MCF 10A (cell line): ENCODE measurements at regions of chr3 and their contacts with region 1.

Region 1: DNA sequence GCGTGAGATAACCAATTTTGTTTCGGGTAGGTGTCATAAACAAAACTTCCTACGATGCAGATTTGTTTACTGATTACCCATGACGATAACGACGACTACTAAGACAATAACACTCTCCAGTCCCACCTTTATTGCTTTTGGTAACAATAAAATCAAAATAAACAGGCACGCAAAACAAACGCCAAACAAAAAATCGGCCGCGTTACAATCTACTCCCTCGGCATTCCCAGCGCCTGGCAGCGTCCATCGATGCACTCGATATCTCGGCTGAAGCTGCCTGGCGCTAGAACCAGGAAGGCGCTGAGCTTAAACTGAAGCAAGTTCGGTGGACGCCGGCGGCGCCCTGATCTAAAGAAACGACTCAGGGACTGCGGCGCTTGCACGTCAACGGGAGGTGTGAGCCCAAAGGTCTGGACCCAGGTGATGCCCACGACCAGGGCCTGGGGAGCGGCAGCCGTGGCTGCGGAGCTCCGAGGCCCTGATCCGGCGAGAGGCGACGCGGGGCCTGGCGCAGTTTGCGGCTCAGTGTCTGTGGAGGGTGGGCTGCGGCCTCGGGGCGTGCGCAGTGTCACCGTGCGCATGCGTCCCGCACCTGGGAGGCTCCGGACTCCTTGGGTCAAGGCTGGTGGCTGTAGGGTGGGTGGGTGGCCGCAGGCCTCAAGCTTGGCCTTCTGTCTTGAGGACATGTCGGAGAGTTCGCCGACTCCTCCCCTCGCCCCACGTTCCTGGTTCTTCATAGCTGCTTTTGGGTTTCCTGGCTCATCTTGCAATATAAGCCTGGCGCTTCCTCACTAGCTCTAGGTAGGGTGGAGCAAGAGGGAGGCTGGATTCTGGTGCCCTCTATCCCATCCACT is at the start of gene RSRC1:
- DNase-seq: peak; percentile 91
- H3K4me3 Mint-ChIP-seq: peak within 1 kb of the TSS; percentile 86
- H3K27ac Mint-ChIP-seq: peak within 1 kb of the TSS; percentile 97
- H3K4me1 Mint-ChIP-seq: peaks cover 29% of the 10 kb centered on the region
- H3K27me3 Mint-ChIP-seq: no peaks in the 10 kb centered on the region
- CTCF ChIP-seq: no peak
- total RNA-seq, gene RSRC1: 32.3 and 35.8 TPM in 2 replicates

Region 2: DNA sequence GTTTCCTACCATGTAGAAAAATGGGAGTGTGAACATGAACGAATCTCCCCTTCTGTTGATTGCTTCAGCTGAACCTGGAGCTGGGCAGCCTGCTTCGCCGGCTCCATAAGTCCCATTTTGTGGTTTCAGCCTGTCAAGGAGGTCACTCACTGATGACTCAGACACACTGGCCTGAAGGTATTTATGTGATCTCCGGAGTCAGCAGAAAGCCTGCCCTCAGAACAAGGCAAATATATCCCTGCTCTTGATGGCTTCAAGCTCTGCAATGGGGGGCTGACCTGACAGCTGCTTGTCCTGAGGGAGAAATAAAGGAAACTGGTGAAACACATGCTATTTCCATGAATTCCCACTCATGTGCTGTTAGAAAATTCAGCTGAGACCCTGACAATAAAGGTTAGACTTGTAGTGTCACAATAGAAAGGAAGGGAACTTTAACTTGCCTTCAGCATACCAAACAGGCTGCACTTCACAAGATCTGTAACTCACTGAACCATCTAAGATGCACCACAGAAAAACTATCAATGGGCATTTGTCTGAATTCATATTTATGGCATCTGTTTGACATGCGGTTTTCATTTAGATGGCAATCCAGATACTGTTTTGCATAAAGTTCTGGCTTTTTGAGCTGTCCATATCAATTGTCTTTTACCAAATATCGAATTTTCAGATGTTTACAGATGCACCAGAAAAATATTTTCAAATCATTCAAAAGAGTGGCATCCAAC is 324.8 kb before region 1 on chr3:
- CTCF ChIA-PET with region 1: interaction called, 5 read pairs
- POLR2A ChIA-PET with region 1: interaction called, 15 read pairs
- intact Hi-C with region 1: no loop called
- DNase-seq: peak; percentile 93
- H3K4me3 Mint-ChIP-seq: no peak overlapping the region
- H3K27ac Mint-ChIP-seq: peak overlapping the region; percentile 55
- H3K4me1 Mint-ChIP-seq: peaks cover 48% of the 10 kb centered on the region
- H3K27me3 Mint-ChIP-seq: no peaks in the 10 kb centered on the region
- CTCF ChIP-seq: no peak

Region 3: DNA sequence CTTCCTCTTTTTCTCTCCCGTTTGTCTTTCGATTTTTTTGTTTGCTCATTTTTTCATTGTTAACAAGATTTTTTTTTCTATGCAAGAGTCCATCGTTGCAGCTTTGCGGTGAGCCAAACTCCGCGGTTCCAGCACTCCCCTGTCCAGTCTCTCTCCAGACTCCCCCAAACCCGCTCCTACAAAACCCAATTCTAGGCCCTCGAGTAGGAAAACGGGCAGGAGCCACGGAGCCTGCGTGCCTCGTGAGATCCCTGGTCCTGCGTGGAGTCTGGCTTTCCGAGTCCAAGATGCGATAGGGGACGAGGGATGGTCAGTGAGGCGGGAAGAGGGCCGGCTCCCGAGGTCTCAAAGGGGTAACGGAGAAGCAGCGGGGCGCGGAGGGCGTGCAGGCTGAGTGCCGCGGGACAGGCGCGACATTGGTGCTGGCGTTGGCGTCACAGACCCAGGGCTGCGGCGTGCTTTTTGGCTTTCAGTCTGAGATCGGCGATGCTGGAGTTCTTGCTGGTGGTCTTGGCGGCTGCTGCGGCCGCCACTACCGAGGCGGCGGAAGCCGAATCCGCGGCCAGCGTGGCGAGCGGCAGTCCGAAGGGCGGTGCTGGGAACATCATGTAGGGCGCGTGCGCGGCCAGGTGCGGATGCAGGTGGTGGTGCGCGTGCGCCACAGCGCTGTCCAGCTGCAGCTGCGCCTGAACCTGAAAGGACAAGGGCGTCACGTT is 12.3 kb before region 1 on chr3:
- CTCF ChIA-PET with region 1: interaction called, 3 read pairs
- POLR2A ChIA-PET with region 1: interaction called, 12 read pairs
- intact Hi-C with region 1: no loop called
- DNase-seq: peak; percentile 74
- H3K4me3 Mint-ChIP-seq: peak overlapping the region; percentile 84
- H3K27ac Mint-ChIP-seq: peak overlapping the region; percentile 58
- H3K4me1 Mint-ChIP-seq: peaks cover 6% of the 10 kb centered on the region
- H3K27me3 Mint-ChIP-seq: no peaks in the 10 kb centered on the region
- CTCF ChIP-seq: no peak

Region 4: GRCh38 chr3:158121295-158121694 is 11.3 kb after region 1 on chr3:
- CTCF ChIA-PET with region 1: interaction called, 6 read pairs
- POLR2A ChIA-PET with region 1: interaction called, 59 read pairs
- intact Hi-C with region 1: no loop called
- DNase-seq: no peak
- H3K4me3 Mint-ChIP-seq: no peak overlapping the region
- H3K27ac Mint-ChIP-seq: no peak overlapping the region
- H3K4me1 Mint-ChIP-seq: peaks cover 8% of the 10 kb centered on the region
- H3K27me3 Mint-ChIP-seq: no peaks in the 10 kb centered on the region
- CTCF ChIP-seq: no peak

Region 5: GRCh38 chr3:158167737-158168471 is 57.9 kb after region 1 on chr3:
- CTCF ChIA-PET with region 1: interaction called, 3 read pairs
- POLR2A ChIA-PET with region 1: interaction called, 9 read pairs
- intact Hi-C with region 1: loop called (anchors 1 kb)
- DNase-seq: peak; percentile 96
- H3K4me3 Mint-ChIP-seq: peak overlapping the region; percentile 49
- H3K27ac Mint-ChIP-seq: peak overlapping the region; percentile 59
- H3K4me1 Mint-ChIP-seq: peaks cover 18% of the 10 kb centered on the region
- H3K27me3 Mint-ChIP-seq: no peaks in the 10 kb centered on the region
- CTCF ChIP-seq: no peak

Region 6: DNA sequence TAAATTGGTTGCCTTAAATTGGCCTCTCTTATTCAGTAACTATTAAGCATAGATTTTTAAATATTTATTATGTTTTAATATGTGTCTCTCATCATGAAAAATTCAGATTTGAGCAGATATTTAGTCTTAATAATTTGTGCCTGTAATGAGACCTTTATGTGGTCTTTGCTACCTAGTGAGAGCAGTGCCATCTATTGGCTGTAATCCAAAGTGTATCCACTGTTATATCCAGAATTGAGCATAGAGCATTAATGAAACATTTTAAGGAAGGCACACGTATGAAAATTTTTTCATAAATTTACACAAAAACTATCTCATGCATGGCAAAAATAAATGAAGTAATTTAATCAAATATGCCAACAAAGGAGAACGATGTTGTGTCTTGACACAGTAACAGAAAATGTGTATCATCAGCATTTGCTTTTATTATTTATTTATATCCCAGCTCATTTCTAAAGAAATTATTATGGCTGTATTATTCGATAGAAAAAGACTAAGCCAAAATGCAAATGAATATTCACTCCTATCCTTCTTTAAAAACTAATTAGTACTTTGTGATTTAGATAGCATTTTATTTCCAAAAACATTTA is 203.4 kb after region 1 on chr3:
- CTCF ChIA-PET with region 1: interaction called, 5 read pairs
- POLR2A ChIA-PET with region 1: no interaction called
- intact Hi-C with region 1: loop called (anchors 2 kb)
- DNase-seq: peak; percentile 52
- H3K4me3 Mint-ChIP-seq: no peak overlapping the region
- H3K27ac Mint-ChIP-seq: peak overlapping the region; percentile 25
- H3K4me1 Mint-ChIP-seq: peaks cover 5% of the 10 kb centered on the region
- H3K27me3 Mint-ChIP-seq: no peaks in the 10 kb centered on the region
- CTCF ChIP-seq: peak; percentile 38